ENCODE measurements at regions of chr13 and their contacts with region 1.

Region 1: DNA sequence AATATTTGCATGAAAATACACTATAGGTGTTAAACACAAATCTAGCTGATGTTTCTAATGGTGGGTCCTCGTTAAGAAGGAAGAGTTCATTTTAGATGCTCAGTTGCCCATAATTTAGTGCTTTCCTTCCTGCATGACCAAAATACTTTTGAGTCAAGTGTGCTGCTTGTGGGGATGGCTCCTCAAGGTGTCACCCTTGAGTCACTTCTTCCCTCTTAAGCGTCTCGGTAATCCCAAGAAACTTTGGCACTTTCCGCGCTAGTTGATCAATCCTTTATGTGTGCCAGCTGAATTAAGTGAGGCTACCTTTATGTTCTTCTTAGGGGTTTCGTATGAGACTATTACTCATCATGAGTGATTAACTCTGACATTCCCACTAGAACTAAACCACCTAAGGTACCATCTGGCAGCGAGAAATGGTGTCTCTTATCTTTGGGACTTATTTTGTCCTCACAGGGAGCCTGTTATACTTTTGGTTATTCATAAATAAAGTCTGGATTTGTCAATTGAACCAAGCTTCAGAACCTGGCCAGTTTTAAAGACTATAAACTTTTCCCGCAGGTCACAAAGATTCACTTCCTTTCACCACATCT is 106.8 kb downstream of the NHLRC3 start:
- DNase-seq: peak; percentile 18 to 24
- ATAC-seq: peak; percentile 53 to 57
- H3K4me3 ChIP-seq: no peak overlapping the region
- H3K27ac ChIP-seq: no peak overlapping the region
- H3K4me1 ChIP-seq: peaks cover 0 to 3% of the 10 kb centered on the region in 2 donors
- H3K27me3 ChIP-seq: no peaks in the 10 kb centered on the region
- CTCF ChIP-seq: peak in 4 of 5 experiments; percentile 31 to 70 (median 61)
- POLR2A ChIP-seq: no peak

Region 2: DNA sequence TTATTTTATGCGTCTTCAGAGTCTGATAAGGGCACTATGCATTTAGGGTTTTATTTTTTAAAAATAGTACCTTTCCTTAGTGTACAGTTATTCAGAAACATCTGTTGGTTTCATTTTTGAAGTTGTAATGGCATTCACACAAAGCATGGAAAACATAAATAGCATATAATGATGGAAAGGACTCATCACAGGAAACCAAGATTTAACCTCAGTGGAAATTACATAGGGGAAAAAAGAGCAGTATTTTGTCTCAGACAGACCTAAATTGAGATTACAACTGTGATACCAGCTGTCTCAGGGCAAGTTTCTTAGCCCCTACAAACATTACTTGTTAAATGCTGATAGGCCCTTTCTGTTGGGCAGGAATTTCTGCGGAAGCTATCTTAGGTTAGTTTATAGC is 49.5 kb before region 1 on chr13:
- in situ Hi-C with region 1: no loop called
- intact Hi-C with region 1: no loop called
- DNase-seq: no peak
- ATAC-seq: no peak
- H3K4me3 ChIP-seq: no peak overlapping the region
- H3K27ac ChIP-seq: no peak overlapping the region
- H3K4me1 ChIP-seq: no peaks in the 10 kb centered on the region
- H3K27me3 ChIP-seq: no peaks in the 10 kb centered on the region
- CTCF ChIP-seq: no peak
- POLR2A ChIP-seq: no peak

Region 3: DNA sequence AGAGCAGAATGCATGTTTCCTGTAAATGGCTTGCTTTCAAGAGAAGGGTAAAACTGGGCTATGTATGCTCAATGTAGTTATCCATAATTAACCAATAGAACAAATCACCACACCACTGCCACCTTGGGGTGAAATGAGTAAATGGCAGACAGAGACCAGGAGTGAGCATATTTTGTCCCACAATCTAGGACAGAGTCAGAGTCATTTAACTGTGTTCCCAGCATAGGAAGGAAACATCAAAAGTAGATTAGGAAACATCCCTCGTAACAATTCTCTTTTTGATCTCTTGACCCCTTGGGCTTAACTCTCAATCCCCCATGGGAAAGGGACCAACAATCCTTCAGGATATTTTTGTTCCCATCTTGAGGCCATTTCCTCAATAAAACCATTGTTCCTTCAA is 118.0 kb after region 1 on chr13:
- in situ Hi-C with region 1: loop called in 2 of 4 experiments (anchors 5 to 10 kb)
- intact Hi-C with region 1: loop called (anchors 2 kb)
- DNase-seq: no peak
- ATAC-seq: peak; percentile 68 to 76
- H3K4me3 ChIP-seq: no peak overlapping the region
- H3K27ac ChIP-seq: peak overlapping the region in 1 of 4 donors; percentile 13
- H3K4me1 ChIP-seq: peaks cover 14 to 31% of the 10 kb centered on the region in 2 donors
- H3K27me3 ChIP-seq: no peaks in the 10 kb centered on the region
- CTCF ChIP-seq: peak; percentile 32 to 58 (median 42)
- POLR2A ChIP-seq: no peak

Region 4: GRCh38 chr13:39655569-39656324 is 510.7 kb after region 1 on chr13 and contains the start of gene COG6:
- in situ Hi-C with region 1: no loop called
- intact Hi-C with region 1: loop called (anchors 1 kb)
- DNase-seq: peak; percentile 74 to 82
- ATAC-seq: peak; percentile 96 to 98
- H3K4me3 ChIP-seq: peak within 1 kb of the TSS; percentile 88 to 97 (median 94)
- H3K27ac ChIP-seq: peak within 1 kb of the TSS; percentile 77 to 82 (median 78)
- H3K4me1 ChIP-seq: peaks cover 10% of the 10 kb centered on the region in 2 donors
- H3K27me3 ChIP-seq: no peaks in the 10 kb centered on the region
- CTCF ChIP-seq: peak in 2 of 5 experiments; percentile 36 to 42
- POLR2A ChIP-seq: no peak
- total RNA-seq, gene COG6: 5.4 to 13.5 (median 7.1) TPM

Region 5: GRCh38 chr13:39888865-39889810 is 744.1 kb after region 1 on chr13:
- in situ Hi-C with region 1: no loop called
- intact Hi-C with region 1: no loop called
- DNase-seq: no peak
- ATAC-seq: no peak
- H3K4me3 ChIP-seq: no peak overlapping the region
- H3K27ac ChIP-seq: no peak overlapping the region
- H3K4me1 ChIP-seq: no peaks in the 10 kb centered on the region
- H3K27me3 ChIP-seq: no peaks in the 10 kb centered on the region
- CTCF ChIP-seq: no peak
- POLR2A ChIP-seq: no peak